ENCODE measurements at regions of chr13 and their contacts with region 1.

Region 1: GRCh38 chr13:94674609-94675348 is 37.6 kb downstream of the SOX21 start:
- DNase-seq: peak; percentile 50
- H3K4me3 ChIP-seq: no peak overlapping the region
- H3K27ac ChIP-seq: no peak overlapping the region
- H3K4me1 ChIP-seq: no peaks in the 10 kb centered on the region
- H3K27me3 ChIP-seq: no peaks in the 10 kb centered on the region
- CTCF ChIP-seq: peak; percentile 55

Region 2: DNA sequence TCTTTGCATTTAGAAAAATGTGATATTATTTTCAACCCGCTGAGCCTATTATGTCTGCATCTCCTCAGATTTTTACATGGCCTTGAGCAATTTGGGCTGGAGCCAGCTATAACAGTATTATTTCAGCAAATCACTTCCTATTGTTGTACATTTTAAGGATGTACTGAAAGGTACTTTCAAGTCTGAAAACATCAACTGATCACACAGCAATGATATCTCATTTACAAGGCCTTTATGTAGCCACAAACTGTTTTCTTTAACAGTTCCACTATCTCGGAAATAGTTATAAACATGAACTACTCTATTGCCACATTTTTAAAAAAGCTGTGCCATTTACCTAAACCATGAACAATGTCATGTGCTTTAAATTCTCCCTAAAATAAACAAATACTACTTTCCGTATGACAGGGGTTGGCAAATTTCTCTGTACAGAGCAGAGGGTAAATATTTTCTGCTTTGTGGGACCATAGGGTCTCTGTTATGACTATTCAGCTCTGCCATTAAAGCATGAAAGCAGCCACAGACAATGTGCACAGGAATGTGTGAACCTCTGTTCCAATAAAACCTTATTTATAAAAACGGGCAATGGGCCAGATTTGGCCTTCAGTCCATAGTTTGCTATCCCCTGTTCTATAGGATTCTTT is 887.8 kb before region 1 on chr13:
- intact Hi-C with region 1: no loop called
- DNase-seq: no peak
- H3K4me3 ChIP-seq: no peak overlapping the region
- H3K27ac ChIP-seq: no peak overlapping the region
- H3K4me1 ChIP-seq: no peaks in the 10 kb centered on the region
- H3K27me3 ChIP-seq: no peaks in the 10 kb centered on the region
- CTCF ChIP-seq: no peak

Region 3: GRCh38 chr13:94731028-94731427 is 56.2 kb after region 1 on chr13:
- intact Hi-C with region 1: no loop called
- DNase-seq: no peak
- H3K4me3 ChIP-seq: no peak overlapping the region
- H3K27ac ChIP-seq: no peak overlapping the region
- H3K4me1 ChIP-seq: no peaks in the 10 kb centered on the region
- H3K27me3 ChIP-seq: no peaks in the 10 kb centered on the region
- CTCF ChIP-seq: no peak

Region 4: GRCh38 chr13:95156208-95156607 is 481.4 kb after region 1 on chr13:
- intact Hi-C with region 1: loop called (anchors 10 kb)
- DNase-seq: no peak
- H3K4me3 ChIP-seq: no peak overlapping the region
- H3K27ac ChIP-seq: no peak overlapping the region
- H3K4me1 ChIP-seq: no peaks in the 10 kb centered on the region
- H3K27me3 ChIP-seq: no peaks in the 10 kb centered on the region
- CTCF ChIP-seq: no peak

Region 5: DNA sequence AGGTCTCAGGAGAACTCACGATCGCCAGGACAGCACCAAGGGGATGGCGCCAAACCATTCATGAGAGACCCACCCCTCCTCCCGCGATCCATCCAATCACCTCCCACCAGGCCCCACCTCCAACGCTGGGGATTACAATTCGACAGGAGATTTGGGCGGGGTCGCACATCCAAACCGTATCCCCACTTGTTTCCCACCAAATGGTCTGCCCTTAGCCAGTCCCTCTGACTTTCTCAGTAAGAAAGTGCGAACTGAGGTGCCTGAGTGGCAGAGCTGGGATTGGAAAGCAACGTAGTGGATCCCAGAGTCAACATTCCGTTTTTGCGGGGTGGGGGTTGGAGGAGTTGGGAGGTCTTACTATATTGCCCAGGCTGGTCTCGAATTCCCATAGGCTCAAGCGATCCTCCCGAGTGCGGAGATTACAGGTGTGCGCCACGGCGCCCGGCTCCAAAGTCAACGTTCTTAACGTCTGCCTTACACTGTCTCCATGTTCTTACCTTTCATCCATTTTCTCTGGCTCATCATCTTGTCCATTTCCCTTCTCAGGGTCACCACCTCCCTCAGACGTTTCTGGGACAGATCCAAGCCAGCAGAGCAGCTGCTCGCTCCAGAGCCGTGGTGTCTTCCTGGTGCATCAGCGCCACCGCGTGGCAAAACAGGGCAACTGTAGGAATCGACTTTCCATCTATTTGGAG is 729.2 kb after region 1 on chr13:
- intact Hi-C with region 1: loop called (anchors 10 kb)
- DNase-seq: peak; percentile 83
- H3K4me3 ChIP-seq: peak overlapping the region; percentile 20
- H3K27ac ChIP-seq: no peak overlapping the region
- H3K4me1 ChIP-seq: no peaks in the 10 kb centered on the region
- H3K27me3 ChIP-seq: no peaks in the 10 kb centered on the region
- CTCF ChIP-seq: peak; percentile 87